HepG2 (cell line): ENCODE measurements at regions of chr12 and their contacts with region 1.

Region 1: GRCh38 chr12:546921-547845 is 87.4 kb downstream of the B4GALNT3 start:
- DNase-seq: peak; percentile 33
- ATAC-seq: peak; percentile 87
- H3K4me3 ChIP-seq: no peak overlapping the region
- H3K27ac ChIP-seq: no peak overlapping the region
- H3K4me1 ChIP-seq: no peaks in the 10 kb centered on the region
- H3K27me3 ChIP-seq: no peaks in the 10 kb centered on the region
- CTCF ChIP-seq: peak; percentile 97
- EP300 ChIP-seq: no peak
- POLR2A ChIP-seq: no peak
- RAD21 ChIP-seq: peak; percentile 98

Region 2: GRCh38 chr12:452667-453210 is 94.4 kb before region 1 on chr12:
- CTCF ChIA-PET with region 1: interaction called, 227 read pairs
- POLR2A ChIA-PET with region 1: no interaction called
- in situ Hi-C with region 1: loop called (anchors 5 kb)
- intact Hi-C with region 1: loop called (anchors 5 kb)
- DNase-seq: no peak
- ATAC-seq: peak; percentile 70
- H3K4me3 ChIP-seq: no peak overlapping the region
- H3K27ac ChIP-seq: no peak overlapping the region
- H3K4me1 ChIP-seq: no peaks in the 10 kb centered on the region
- H3K27me3 ChIP-seq: peaks cover 0 to 2% of the 10 kb centered on the region in 2 experiments; a peak in 2 of 5 replicates
- CTCF ChIP-seq: peak; percentile 80
- EP300 ChIP-seq: no peak
- POLR2A ChIP-seq: no peak
- RAD21 ChIP-seq: 0 out of 2 replicates have a peak, but pooled peaks have one; percentile 19

Region 3: DNA sequence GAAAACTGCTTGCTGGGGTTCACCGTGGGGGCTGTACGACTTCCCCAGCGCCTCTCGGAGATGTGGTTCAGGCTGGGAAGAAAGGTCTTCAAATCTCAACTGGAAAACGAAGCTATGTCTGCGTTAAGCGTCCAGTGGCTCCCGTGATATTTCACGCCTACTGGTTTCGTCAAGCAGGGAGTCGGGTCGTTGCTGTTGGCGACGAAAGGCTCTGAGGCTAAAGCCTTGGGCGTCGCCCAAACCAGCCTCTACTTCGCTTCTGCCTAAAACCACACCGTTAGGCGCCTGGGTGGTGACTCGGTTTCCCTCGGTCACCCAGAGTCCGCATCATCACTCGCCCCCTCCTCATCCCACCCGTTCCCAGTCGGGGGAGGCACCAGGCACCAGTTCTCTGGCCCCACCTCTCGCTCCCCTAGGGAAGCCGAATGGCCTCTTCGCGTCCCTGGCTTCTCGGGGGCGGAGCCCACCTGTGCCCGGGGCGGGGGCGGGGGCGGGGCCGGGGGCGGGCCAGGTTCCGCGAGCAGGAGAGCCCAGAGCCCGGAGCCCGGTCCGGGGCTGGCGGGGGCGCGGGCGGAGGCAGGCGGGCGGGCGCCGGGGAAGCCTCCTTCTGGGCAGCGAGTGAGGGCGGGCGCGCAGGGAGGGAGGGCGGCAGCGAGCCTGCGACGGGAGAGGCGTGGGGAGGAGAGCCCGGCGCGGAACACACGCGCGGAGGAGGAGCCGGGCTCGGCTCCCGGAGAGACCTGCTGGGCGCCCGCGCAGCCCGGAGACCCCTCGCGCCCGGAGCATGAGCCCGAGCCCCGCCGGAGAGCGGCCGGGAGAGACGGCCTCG is 87.5 kb before region 1 on chr12 and contains the start of gene B4GALNT3:
- CTCF ChIA-PET with region 1: interaction called, 227 read pairs
- POLR2A ChIA-PET with region 1: no interaction called
- in situ Hi-C with region 1: loop called (anchors 5 kb)
- intact Hi-C with region 1: loop called (anchors 5 kb)
- DNase-seq: no peak
- ATAC-seq: peak; percentile 67
- H3K4me3 ChIP-seq: peak within 1 kb of the TSS; percentile 46 to 71 (median 64); a peak in 5 of 6 replicates
- H3K27ac ChIP-seq: no peak within 1 kb of the TSS
- H3K4me1 ChIP-seq: peaks cover 27% of the 10 kb centered on the region
- H3K27me3 ChIP-seq: peaks cover 4 to 38% of the 10 kb centered on the region in 2 experiments
- CTCF ChIP-seq: no peak
- EP300 ChIP-seq: no peak
- POLR2A ChIP-seq: no peak
- RAD21 ChIP-seq: no peak
- total RNA-seq, gene B4GALNT3: 2.9 and 4.4 TPM in 2 replicates